T-cell (primary cell): ENCODE measurements at regions of chr15 and their contacts with region 1.

Region 1: GRCh38 chr15:60362321-60363086 is 35.3 kb downstream of the ANXA2 start:
- DNase-seq: peak in 1 of 35 experiments; percentile 9
- ATAC-seq: peak; percentile 29 to 70 (median 50)
- H3K4me3 ChIP-seq: no peak overlapping the region
- H3K4me3 Mint-ChIP-seq: no peak overlapping the region
- H3K27ac ChIP-seq: no peak overlapping the region
- H3K27ac Mint-ChIP-seq: peak overlapping the region; percentile 40 to 78
- H3K4me1 ChIP-seq: peaks cover 0 to 5% of the 10 kb centered on the region in 2 experiments
- H3K4me1 Mint-ChIP-seq: peaks cover 11 to 28% (median 25%) of the 10 kb centered on the region in 3 donors
- H3K27me3 ChIP-seq: no peaks in the 10 kb centered on the region
- H3K27me3 Mint-ChIP-seq: no peaks in the 10 kb centered on the region

Region 2: DNA sequence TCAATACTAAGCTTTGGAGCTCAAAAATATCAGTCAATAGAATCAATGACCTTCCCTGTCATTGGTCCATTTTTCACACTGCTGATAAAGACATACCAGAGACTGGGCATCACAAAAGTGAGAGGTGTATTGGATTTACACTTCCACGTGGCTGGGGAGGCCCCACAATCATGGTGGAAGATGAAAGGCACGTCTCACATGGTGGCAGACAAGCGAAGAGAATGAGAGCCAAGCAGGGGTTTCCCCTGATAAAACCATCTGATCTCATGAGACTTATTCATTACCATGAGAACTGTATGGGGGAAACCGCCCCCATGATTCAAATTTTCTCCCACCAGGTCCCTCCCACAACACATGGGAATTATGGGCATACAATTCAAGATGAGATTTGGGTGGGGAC is 46.6 kb before region 1 on chr15:
- CTCF ChIA-PET with region 1: no interaction called
- POLR2A ChIA-PET with region 1: no interaction called
- DNase-seq: no peak
- ATAC-seq: no peak
- H3K4me3 ChIP-seq: no peak overlapping the region
- H3K4me3 Mint-ChIP-seq: no peak overlapping the region
- H3K27ac ChIP-seq: no peak overlapping the region
- H3K27ac Mint-ChIP-seq: no peak overlapping the region
- H3K4me1 ChIP-seq: no peaks in the 10 kb centered on the region
- H3K4me1 Mint-ChIP-seq: no peaks in the 10 kb centered on the region
- H3K27me3 ChIP-seq: peaks cover 0 to 7% of the 10 kb centered on the region in 2 experiments
- H3K27me3 Mint-ChIP-seq: peaks cover 0 to 10% of the 10 kb centered on the region in 2 donors

Region 3: DNA sequence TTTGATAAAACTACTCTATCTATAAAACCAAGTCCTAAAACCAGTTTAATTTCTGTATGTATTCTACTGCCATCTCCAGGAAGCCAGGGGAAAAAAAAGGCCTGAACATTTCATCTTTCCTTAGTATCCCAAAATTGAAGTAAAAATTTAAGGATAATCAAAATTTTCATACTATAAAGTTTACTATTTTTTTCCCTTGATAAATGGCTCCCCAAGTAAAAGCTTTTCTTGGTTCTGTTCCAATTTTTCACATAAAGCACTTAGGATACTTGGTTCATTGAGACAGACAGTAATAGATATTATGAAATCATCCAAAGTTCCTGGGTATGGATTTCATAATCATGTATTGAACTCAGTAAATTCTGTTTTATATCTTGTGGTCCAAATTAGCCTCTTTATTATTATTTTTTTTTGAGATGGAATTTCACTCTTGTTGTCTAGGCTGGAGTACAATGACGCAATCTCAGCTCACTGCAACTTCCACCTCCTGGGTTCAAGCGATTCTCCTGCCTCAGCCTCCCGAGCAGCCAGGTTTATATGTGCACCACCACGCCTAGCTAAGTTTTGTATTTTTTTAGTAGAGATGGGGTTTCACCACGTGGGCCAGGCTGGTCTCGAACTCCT is 81.9 kb after region 1 on chr15:
- CTCF ChIA-PET with region 1: interaction called in 1 of 2 experiments, 13 read pairs
- POLR2A ChIA-PET with region 1: no interaction called
- DNase-seq: peak in 1 of 35 experiments; percentile 14
- ATAC-seq: no peak
- H3K4me3 ChIP-seq: no peak overlapping the region
- H3K4me3 Mint-ChIP-seq: no peak overlapping the region
- H3K27ac ChIP-seq: no peak overlapping the region
- H3K27ac Mint-ChIP-seq: peak overlapping the region in 1 of 2 donors; percentile 6
- H3K4me1 ChIP-seq: no peaks in the 10 kb centered on the region
- H3K4me1 Mint-ChIP-seq: peaks cover 4 to 7% (median 4%) of the 10 kb centered on the region in 3 donors
- H3K27me3 ChIP-seq: no peaks in the 10 kb centered on the region
- H3K27me3 Mint-ChIP-seq: no peaks in the 10 kb centered on the region

Region 4: DNA sequence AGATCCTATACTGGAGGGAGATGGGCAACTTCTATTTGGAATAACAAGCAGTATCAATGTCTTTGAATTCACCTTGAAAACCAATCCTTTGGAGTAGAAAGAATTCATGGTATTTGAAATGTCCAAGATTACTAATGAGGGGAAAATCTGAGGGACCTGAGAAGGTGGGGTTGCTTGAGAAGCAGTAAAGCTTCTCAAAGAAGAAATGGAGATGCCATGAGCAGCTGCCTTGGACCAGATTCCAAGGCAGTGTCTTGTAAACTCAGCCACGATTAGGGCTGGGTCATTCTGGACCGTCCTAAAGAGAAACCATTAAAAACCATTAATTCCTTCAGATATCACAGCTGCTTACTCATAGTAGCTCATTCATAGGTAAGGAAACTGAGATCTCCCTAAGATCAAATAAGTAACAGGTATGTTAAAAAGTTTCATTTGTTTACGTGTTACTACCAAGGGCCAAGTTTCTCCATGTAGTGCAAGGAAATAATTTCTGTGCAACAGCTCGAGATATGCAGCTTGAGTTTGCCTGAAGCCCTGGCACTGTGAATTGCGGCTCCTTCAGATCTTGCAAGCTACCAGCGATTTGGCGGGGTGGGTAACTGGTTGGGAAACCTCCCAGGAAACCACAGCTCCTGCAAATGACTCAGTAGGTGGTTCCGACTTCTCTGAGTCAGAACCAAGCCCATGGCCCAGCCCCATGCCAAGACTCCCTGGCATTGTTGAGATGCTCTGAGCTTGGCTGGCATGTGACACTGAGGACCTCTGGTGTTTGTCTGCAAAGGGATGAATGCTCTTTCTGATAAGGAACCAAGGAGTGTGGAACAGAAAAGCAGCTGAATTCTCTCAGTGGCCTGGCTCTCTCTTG is 569.8 kb after region 1 on chr15:
- CTCF ChIA-PET with region 1: interaction called in 1 of 2 experiments, 12 read pairs
- POLR2A ChIA-PET with region 1: no interaction called
- DNase-seq: peak in 34 of 35 experiments; percentile 1 to 72 (median 26)
- ATAC-seq: peak; percentile 83 to 92 (median 88)
- H3K4me3 ChIP-seq: no peak overlapping the region
- H3K4me3 Mint-ChIP-seq: no peak overlapping the region
- H3K27ac ChIP-seq: no peak overlapping the region
- H3K27ac Mint-ChIP-seq: peak overlapping the region in 1 of 2 donors; percentile 24
- H3K4me1 ChIP-seq: peaks cover 0 to 6% of the 10 kb centered on the region in 2 experiments
- H3K4me1 Mint-ChIP-seq: peaks cover 0 to 21% (median 11%) of the 10 kb centered on the region in 3 donors
- H3K27me3 ChIP-seq: peaks cover 0 to 4% of the 10 kb centered on the region in 2 experiments
- H3K27me3 Mint-ChIP-seq: peaks cover 5 to 21% of the 10 kb centered on the region in 2 donors

Region 5: DNA sequence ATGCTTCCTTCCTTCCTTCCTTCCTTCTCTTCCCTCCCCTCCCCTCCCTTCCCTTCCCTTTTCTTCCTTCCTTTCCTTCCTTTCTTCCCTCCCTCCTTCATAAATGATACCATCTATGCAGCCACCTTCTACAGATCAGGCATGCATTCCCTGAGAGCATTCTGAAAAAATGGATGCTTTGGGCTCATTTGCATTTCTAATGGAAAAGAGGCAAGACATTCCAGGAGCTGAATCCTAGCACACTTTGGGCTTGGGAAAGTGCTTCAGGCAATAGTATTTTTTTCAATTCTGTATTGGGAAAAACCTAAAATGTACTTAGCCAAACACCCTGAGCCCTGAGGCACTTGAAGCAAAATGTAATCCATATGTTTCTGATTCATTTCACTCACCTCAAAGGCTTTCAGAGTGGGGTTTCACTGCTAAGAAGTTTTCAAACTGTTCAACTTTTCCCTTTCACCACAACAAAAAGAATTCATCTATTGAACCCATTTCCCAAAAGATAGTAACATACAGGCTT is 1086.7 kb after region 1 on chr15:
- CTCF ChIA-PET with region 1: no interaction called
- POLR2A ChIA-PET with region 1: no interaction called
- DNase-seq: no peak
- ATAC-seq: no peak
- H3K4me3 ChIP-seq: no peak overlapping the region
- H3K4me3 Mint-ChIP-seq: no peak overlapping the region
- H3K27ac ChIP-seq: no peak overlapping the region
- H3K27ac Mint-ChIP-seq: no peak overlapping the region
- H3K4me1 ChIP-seq: no peaks in the 10 kb centered on the region
- H3K4me1 Mint-ChIP-seq: no peaks in the 10 kb centered on the region
- H3K27me3 ChIP-seq: no peaks in the 10 kb centered on the region
- H3K27me3 Mint-ChIP-seq: peaks cover 8 to 15% of the 10 kb centered on the region in 2 donors

Region 6: DNA sequence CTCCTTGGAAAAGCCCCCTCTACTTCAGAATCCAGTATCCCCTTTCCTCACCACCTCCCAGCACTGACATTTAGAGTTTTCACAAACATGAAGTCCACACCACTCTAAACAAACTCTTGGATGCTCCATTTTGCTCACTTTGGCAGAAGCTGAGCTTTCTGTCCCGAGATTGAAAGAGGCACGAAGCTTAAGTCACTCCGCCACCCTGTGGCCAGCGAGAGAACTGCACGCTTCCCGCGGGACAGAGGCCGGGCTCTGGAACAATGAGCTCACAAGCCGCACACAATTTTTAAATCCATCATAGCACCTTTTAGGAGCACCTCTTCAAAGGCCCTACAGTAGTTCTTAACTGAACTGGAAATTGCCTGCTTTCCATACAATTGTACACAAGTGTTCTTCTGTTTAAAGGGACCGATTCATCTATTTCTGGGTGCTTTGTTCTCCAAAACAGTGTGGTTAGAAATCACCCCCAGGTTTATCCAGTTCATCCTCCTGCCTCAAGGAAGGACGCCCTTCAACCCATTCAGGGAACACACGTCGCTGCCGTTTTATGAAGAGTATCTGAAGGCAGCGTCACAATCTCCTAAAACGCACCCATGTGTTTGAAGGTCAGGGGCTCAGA is 1471.7 kb after region 1 on chr15:
- CTCF ChIA-PET with region 1: interaction called, 3 to 18 read pairs
- POLR2A ChIA-PET with region 1: no interaction called
- DNase-seq: peak; percentile 24 to 80 (median 59)
- ATAC-seq: peak; percentile 67 to 76 (median 69)
- H3K4me3 ChIP-seq: no peak overlapping the region
- H3K4me3 Mint-ChIP-seq: no peak overlapping the region
- H3K27ac ChIP-seq: no peak overlapping the region
- H3K27ac Mint-ChIP-seq: no peak overlapping the region
- H3K4me1 ChIP-seq: peaks cover 0 to 15% of the 10 kb centered on the region in 2 experiments
- H3K4me1 Mint-ChIP-seq: peaks cover 5 to 15% (median 10%) of the 10 kb centered on the region in 3 donors
- H3K27me3 ChIP-seq: peaks cover 0 to 49% of the 10 kb centered on the region in 2 experiments
- H3K27me3 Mint-ChIP-seq: peaks cover 19 to 30% of the 10 kb centered on the region in 2 donors